CD14-positive monocyte (primary cell): ENCODE measurements at regions of chr10 and their contacts with region 1.

Region 1: DNA sequence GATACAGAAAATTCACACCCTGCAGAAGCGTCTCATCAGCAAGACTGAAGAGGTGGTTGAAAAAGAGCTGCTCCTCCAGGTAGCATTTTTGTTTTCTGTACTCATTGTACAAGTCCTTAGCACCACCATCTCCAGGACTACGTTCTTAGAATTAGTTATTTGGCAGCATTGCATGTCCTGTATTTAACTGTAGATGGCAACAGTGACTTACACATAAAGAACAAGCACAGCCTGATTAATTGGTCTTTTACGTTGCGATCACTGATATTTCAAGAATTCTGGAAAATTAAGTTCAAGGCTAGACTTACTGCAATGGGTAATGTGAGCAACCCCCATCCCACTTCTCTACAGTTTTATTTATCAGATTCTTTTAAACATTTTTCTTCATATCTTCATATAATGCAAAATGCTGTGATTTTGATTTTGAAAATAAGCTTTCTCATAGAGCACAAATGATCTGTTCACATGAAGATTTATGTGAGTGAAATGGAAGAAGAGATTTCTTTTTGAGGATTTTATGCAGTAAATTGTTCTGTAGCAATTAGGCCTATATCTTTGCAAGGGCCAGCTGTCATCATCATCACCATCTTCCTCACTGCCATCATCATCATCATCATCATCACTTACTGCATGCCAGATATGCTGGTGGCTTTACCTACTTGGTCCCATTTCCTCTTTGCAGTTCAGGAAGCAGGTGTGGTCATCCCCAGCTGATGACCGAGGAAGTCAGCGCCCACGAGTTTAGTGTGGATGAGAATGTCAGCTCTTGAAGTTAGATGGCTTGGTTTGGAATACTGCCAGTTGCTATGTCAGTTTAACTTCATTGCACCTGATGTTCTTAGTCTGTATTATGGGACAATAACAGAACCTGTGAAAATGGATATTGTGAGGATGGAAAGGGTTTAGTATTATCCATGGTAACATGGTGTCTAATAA is 53.4 kb downstream of the CFAP58 start:
- DNase-seq: peak; percentile 18 to 49 (median 37)
- H3K4me3 ChIP-seq: no peak overlapping the region
- H3K4me3 Mint-ChIP-seq: no peak overlapping the region
- H3K27ac ChIP-seq: no peak overlapping the region
- H3K27ac Mint-ChIP-seq: no peak overlapping the region
- H3K4me1 ChIP-seq: no peaks in the 10 kb centered on the region
- H3K4me1 Mint-ChIP-seq: no peaks in the 10 kb centered on the region
- H3K27me3 ChIP-seq: peaks cover 0 to 3% of the 10 kb centered on the region in 2 donors
- H3K27me3 Mint-ChIP-seq: peaks cover 6 to 19% (median 15%) of the 10 kb centered on the region in 3 donors
- CTCF ChIP-seq: peak; percentile 68

Region 2: GRCh38 chr10:104424719-104425118 is 17.7 kb after region 1 on chr10:
- intact Hi-C with region 1: no loop called
- DNase-seq: no peak
- H3K4me3 ChIP-seq: no peak overlapping the region
- H3K4me3 Mint-ChIP-seq: no peak overlapping the region
- H3K27ac ChIP-seq: no peak overlapping the region
- H3K27ac Mint-ChIP-seq: no peak overlapping the region
- H3K4me1 ChIP-seq: peaks cover 0 to under 1% of the 10 kb centered on the region in 2 donors
- H3K4me1 Mint-ChIP-seq: peaks cover 3% of the 10 kb centered on the region
- H3K27me3 ChIP-seq: no peaks in the 10 kb centered on the region
- H3K27me3 Mint-ChIP-seq: peaks cover 0 to under 1% (median 0%) of the 10 kb centered on the region in 3 donors
- CTCF ChIP-seq: no peak

Region 3: GRCh38 chr10:104580774-104581675 is 174.0 kb after region 1 on chr10:
- intact Hi-C with region 1: loop called in 1 of 2 experiments (anchors 5 kb)
- DNase-seq: peak; percentile 41 to 60 (median 56)
- H3K4me3 ChIP-seq: no peak overlapping the region
- H3K4me3 Mint-ChIP-seq: peak overlapping the region in 1 of 2 donors; percentile 44
- H3K27ac ChIP-seq: no peak overlapping the region
- H3K27ac Mint-ChIP-seq: peak overlapping the region in 1 of 7 donors; percentile 39
- H3K4me1 ChIP-seq: no peaks in the 10 kb centered on the region
- H3K4me1 Mint-ChIP-seq: no peaks in the 10 kb centered on the region
- H3K27me3 ChIP-seq: peaks cover 0 to 5% of the 10 kb centered on the region in 2 donors
- H3K27me3 Mint-ChIP-seq: peaks cover 14 to 20% (median 20%) of the 10 kb centered on the region in 3 donors
- CTCF ChIP-seq: peak; percentile 91

Region 4: GRCh38 chr10:104614245-104614831 is 207.4 kb after region 1 on chr10:
- intact Hi-C with region 1: loop called (anchors 2 to 10 kb)
- DNase-seq: peak; percentile 14 to 40 (median 32)
- H3K4me3 ChIP-seq: no peak overlapping the region
- H3K4me3 Mint-ChIP-seq: no peak overlapping the region
- H3K27ac ChIP-seq: no peak overlapping the region
- H3K27ac Mint-ChIP-seq: no peak overlapping the region
- H3K4me1 ChIP-seq: no peaks in the 10 kb centered on the region
- H3K4me1 Mint-ChIP-seq: no peaks in the 10 kb centered on the region
- H3K27me3 ChIP-seq: no peaks in the 10 kb centered on the region
- H3K27me3 Mint-ChIP-seq: peaks cover 6 to 10% (median 8%) of the 10 kb centered on the region in 3 donors
- CTCF ChIP-seq: peak; percentile 78

Region 5: DNA sequence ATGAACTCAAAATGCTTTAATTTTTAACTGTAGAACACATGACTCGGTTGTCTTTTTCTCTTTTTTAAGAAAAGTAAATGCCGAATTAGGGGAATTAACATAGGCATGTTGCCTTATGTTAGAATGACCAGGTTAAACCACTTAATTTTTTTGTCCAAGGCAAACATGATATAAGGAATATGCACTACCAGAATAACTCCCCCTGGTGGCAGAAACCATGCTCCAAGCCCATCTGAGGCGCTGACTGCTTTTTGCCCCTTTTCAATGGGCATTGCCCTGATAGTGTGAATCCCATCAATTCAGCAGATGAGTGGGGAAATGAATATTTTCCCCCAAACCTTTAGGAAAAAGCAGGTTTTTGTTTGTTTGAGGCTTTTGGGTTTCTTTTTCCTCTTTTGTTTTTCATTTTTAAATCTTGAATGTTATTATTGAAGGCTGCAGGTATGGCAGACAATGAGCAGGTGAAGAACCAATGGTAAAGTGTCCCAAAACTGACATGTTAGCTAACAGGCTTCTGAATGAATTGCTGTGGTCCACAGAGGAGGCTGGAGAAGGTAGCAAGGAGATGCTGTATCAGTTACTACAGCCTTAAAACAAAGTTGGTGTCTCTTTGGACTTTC is 518.4 kb after region 1 on chr10:
- intact Hi-C with region 1: loop called in 1 of 2 experiments (anchors 10 kb)
- DNase-seq: peak in 2 of 3 donors; percentile 1 to 9
- H3K4me3 ChIP-seq: no peak overlapping the region
- H3K4me3 Mint-ChIP-seq: no peak overlapping the region
- H3K27ac ChIP-seq: no peak overlapping the region
- H3K27ac Mint-ChIP-seq: no peak overlapping the region
- H3K4me1 ChIP-seq: no peaks in the 10 kb centered on the region
- H3K4me1 Mint-ChIP-seq: no peaks in the 10 kb centered on the region
- H3K27me3 ChIP-seq: no peaks in the 10 kb centered on the region
- H3K27me3 Mint-ChIP-seq: peaks cover 0 to 6% (median 2%) of the 10 kb centered on the region in 3 donors
- CTCF ChIP-seq: peak; percentile 59